OCI-LY7 (cell line): ENCODE measurements at regions of chr3 and their contacts with region 1.

Region 1: GRCh38 chr3:76976996-76977395 is 62.9 kb upstream of the ROBO2 start:
- DNase-seq: no peak
- H3K4me3 ChIP-seq: no peak overlapping the region
- H3K27ac ChIP-seq: no peak overlapping the region
- H3K4me1 ChIP-seq: no peaks in the 10 kb centered on the region
- CTCF ChIP-seq: no peak

Region 2: GRCh38 chr3:76789237-76789636 is 187.8 kb before region 1 on chr3:
- CTCF ChIA-PET with region 1: no interaction called
- POLR2A ChIA-PET with region 1: no interaction called
- intact Hi-C with region 1: loop called (anchors 5 kb)
- DNase-seq: no peak
- H3K4me3 ChIP-seq: no peak overlapping the region
- H3K27ac ChIP-seq: no peak overlapping the region
- H3K4me1 ChIP-seq: no peaks in the 10 kb centered on the region
- CTCF ChIP-seq: no peak